HepG2 (cell line): ENCODE measurements at regions of chr1 and their contacts with region 1.

Region 1: GRCh38 chr1:177780096-177780700 is 189.7 kb downstream of the SEC16B start:
- DNase-seq: peak; percentile 63
- ATAC-seq: peak; percentile 84
- H3K4me3 ChIP-seq: no peak overlapping the region
- H3K27ac ChIP-seq: no peak overlapping the region
- H3K4me1 ChIP-seq: no peaks in the 10 kb centered on the region
- H3K27me3 ChIP-seq: no peaks in the 10 kb centered on the region
- CTCF ChIP-seq: peak; percentile 72
- EP300 ChIP-seq: no peak
- POLR2A ChIP-seq: no peak
- RAD21 ChIP-seq: peak; percentile 58

Region 2: DNA sequence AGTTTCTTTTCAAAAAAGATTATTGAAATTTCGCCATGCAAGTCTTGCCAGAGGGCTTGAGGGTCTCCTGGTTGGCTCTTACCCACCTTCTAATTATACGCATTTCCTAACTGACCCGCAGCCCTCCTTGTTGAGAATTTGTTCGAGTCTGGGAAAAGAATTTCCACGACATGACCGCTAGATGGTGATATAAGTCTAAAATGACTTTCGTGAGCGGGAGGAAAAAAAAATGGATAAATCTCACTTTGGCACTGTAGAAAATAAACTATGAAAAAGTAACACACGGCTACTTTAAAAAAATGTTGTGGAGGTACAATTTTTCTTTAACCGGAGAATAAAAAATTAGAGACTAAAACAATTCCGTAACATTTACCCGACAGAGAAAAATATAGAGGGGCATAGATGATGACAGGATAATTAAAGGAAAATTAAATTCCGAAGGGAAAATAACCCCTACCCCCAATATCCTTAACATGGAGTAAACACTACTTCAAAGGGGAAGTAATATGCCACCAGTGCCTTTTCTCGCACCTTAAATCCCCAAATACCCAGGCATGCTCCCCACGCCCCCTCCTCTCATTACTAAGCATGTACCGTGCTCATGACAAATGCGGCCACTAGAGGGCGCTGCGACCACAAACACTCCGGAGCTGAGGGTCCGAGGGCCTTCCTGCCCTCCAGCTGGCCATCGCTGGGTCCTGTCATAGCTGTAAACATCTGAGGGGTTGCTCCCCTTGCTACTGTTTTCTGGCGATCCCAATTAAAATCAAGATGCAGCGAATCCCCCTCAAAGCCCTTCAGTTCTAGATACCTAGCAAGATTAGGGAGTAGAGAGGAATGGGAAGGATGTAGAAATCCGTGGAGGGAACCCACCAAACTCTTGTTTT is 882.6 kb before region 1 on chr1:
- CTCF ChIA-PET with region 1: interaction called, 3 read pairs
- POLR2A ChIA-PET with region 1: no interaction called
- in situ Hi-C with region 1: loop called (anchors 25 kb)
- intact Hi-C with region 1: loop called (anchors 5 kb)
- DNase-seq: peak; percentile 56
- ATAC-seq: peak; percentile 94
- H3K4me3 ChIP-seq: no peak overlapping the region
- H3K27ac ChIP-seq: no peak overlapping the region
- H3K4me1 ChIP-seq: peaks cover 6% of the 10 kb centered on the region; the same call in 1 of the 2 replicates
- H3K27me3 ChIP-seq: peaks cover 0 to 4% of the 10 kb centered on the region in 2 experiments; a peak in 2 of 5 replicates
- CTCF ChIP-seq: peak; percentile 83
- EP300 ChIP-seq: no peak
- POLR2A ChIP-seq: no peak
- RAD21 ChIP-seq: no peak; the same call in 1 of the 2 replicates

Region 3: GRCh38 chr1:177429263-177429662 is 350.9 kb before region 1 on chr1:
- CTCF ChIA-PET with region 1: no interaction called
- POLR2A ChIA-PET with region 1: no interaction called
- in situ Hi-C with region 1: no loop called
- intact Hi-C with region 1: loop called (anchors 1 kb)
- DNase-seq: no peak
- ATAC-seq: no peak
- H3K4me3 ChIP-seq: no peak overlapping the region
- H3K27ac ChIP-seq: no peak overlapping the region
- H3K4me1 ChIP-seq: no peaks in the 10 kb centered on the region
- H3K27me3 ChIP-seq: no peaks in the 10 kb centered on the region
- CTCF ChIP-seq: no peak
- EP300 ChIP-seq: no peak
- POLR2A ChIP-seq: no peak
- RAD21 ChIP-seq: no peak

Region 4: DNA sequence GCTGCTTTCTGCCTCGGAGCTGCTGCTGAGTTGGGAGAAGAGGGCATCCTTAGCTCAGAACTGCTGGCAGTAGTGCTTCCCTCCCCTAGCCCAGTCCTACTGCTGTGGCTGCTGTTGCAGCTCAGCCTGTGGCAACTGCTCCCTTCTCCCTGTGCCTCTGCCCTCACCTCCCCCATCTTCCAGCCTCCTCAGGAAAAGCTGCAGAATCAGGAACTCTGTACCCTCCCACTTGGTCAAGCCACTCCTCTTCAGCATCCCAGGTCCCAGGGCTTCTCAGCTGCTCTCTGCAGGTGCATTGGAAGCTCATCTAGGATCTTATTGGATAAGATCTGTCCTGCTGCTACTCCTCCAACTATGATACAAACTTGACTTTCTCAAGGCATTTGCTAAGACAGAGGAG is 292.7 kb before region 1 on chr1:
- CTCF ChIA-PET with region 1: no interaction called
- POLR2A ChIA-PET with region 1: no interaction called
- in situ Hi-C with region 1: no loop called
- intact Hi-C with region 1: loop called (anchors 5 kb)
- DNase-seq: no peak
- ATAC-seq: no peak
- H3K4me3 ChIP-seq: no peak overlapping the region
- H3K27ac ChIP-seq: no peak overlapping the region
- H3K4me1 ChIP-seq: no peaks in the 10 kb centered on the region
- H3K27me3 ChIP-seq: no peaks in the 10 kb centered on the region
- CTCF ChIP-seq: no peak
- EP300 ChIP-seq: no peak
- POLR2A ChIP-seq: no peak
- RAD21 ChIP-seq: no peak